B cell (primary cell): ENCODE measurements at regions of chr15 and their contacts with region 1.

Region 1: GRCh38 chr15:89406940-89407607 is 72.5 kb upstream of the POLG start:
- DNase-seq: no peak
- ATAC-seq: no peak
- H3K4me3 ChIP-seq: peak overlapping the region in 3 of 5 experiments; percentile 6 to 55 (median 15)
- H3K4me3 Mint-ChIP-seq: peak overlapping the region; percentile 95
- H3K27ac ChIP-seq: no peak overlapping the region
- H3K27ac Mint-ChIP-seq: no peak overlapping the region
- H3K4me1 ChIP-seq: peaks cover 61 to 68% of the 10 kb centered on the region in 2 donors
- H3K4me1 Mint-ChIP-seq: peaks cover 52% of the 10 kb centered on the region
- H3K27me3 ChIP-seq: peaks cover 3 to 98% (median 90%) of the 10 kb centered on the region in 4 experiments
- H3K27me3 Mint-ChIP-seq: peaks cover 87% of the 10 kb centered on the region
- CTCF ChIP-seq: no peak

Region 2: DNA sequence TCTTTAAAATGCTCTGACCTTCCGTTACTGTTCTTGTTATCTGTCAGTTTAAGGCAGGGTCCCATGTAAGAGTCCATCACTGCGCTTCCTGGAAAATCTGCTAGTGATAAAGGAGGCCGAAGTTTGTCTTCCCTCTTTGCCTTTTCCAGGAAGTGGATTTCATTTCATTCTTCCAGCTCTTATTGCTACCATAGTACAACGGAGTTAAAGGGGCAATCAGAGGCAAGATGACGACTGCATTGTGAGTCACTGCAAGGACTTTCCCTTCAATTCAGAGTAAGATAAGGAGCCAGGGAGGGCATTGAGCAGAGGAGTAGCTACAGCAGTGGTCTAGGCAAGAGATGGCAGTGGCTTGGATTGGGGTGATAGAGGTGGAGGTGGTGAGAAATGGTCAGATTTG is 843.4 kb before region 1 on chr15:
- CTCF ChIA-PET with region 1: no interaction called
- POLR2A ChIA-PET with region 1: no interaction called
- intact Hi-C with region 1: no loop called
- DNase-seq: no peak
- ATAC-seq: no peak
- H3K4me3 ChIP-seq: no peak overlapping the region
- H3K4me3 Mint-ChIP-seq: no peak overlapping the region
- H3K27ac ChIP-seq: no peak overlapping the region
- H3K27ac Mint-ChIP-seq: no peak overlapping the region
- H3K4me1 ChIP-seq: no peaks in the 10 kb centered on the region
- H3K4me1 Mint-ChIP-seq: no peaks in the 10 kb centered on the region
- H3K27me3 ChIP-seq: no peaks in the 10 kb centered on the region
- H3K27me3 Mint-ChIP-seq: peaks cover 35% of the 10 kb centered on the region
- CTCF ChIP-seq: no peak

Region 3: DNA sequence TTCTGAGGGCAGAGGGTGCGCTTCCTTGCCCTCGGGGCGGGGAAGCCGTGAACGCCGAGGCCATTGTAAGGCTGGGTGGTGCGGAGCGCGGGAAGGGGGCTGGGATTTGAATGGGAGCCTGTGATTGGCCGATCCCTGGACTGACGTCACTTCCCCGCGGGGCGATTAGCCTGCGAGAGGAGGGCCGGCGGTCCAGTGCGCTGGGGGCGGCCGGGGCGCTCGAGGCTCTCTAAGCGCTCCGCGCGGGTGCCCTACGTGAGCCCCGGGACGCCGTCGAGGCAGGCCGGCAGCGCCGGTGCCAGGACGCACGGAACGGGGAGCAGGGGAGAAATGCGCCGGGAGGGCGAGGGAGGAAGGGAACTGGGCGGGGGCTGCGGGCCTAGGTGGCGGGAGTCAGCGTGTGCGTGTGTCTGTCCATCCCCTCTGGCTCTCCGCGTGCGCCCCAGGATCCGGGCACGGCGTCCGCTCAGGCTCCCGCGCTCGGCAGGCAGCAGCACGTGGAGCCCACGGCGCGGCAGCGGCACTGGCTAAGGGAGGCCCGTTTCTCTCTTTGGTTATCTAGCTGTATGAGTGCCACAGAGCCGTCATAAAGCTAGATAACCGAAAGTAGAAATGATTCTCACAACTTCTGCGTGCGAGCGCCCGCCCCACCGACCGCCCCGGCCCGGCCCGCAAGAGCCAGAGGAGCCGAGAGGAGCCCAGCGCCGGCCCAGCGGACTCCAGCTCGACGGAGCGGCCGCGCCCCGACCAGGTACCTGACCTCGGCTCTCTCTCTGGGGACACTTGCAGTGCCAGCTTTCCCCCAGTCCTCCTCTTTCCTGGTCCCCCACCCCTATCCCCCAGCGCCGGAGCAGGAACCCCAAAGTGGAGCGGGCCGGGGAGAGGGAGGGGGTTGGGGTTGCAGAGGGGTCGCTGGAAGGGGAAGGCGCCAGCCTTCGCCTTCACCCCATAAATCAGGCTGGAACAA is 39.3 kb before region 1 on chr15:
- CTCF ChIA-PET with region 1: interaction called, 3 read pairs
- POLR2A ChIA-PET with region 1: no interaction called
- intact Hi-C with region 1: loop called (anchors 2 kb)
- DNase-seq: peak; percentile 46
- ATAC-seq: no peak
- H3K4me3 ChIP-seq: peak overlapping the region in 2 of 5 experiments; percentile 14 to 29
- H3K4me3 Mint-ChIP-seq: peak overlapping the region; percentile 63
- H3K27ac ChIP-seq: no peak overlapping the region
- H3K27ac Mint-ChIP-seq: no peak overlapping the region
- H3K4me1 ChIP-seq: peaks cover 26 to 35% of the 10 kb centered on the region in 2 donors
- H3K4me1 Mint-ChIP-seq: peaks cover 27% of the 10 kb centered on the region
- H3K27me3 ChIP-seq: peaks cover 0 to 98% (median 65%) of the 10 kb centered on the region in 4 experiments
- H3K27me3 Mint-ChIP-seq: peaks cover 71% of the 10 kb centered on the region
- CTCF ChIP-seq: no peak

Region 4: DNA sequence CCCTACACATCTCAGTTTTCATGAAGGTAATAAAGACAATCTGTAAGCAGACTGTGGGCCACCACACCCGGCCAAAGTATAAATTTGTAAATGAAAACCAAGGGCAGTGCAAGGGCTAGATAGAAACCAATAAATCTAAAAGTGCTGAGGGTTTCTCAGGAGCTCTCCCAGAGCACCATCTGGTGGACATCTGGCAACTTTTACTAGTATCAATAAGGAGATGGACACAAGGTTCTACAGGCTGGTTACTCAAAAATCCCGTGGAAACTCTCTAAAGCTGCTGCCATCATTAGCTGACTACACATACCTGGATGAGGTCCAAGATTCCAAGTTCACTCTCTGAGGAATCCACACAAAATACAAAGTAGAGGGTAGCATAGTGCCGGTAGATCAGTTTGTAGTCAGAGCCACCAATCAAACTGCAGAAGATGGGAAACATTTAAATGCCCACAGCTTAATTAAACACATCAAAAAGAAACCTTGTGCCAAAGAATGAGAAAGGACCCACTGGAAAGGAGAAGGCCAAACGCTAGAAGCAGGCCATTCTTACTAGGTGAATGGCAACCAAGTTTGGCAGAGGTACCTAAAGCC is 481.2 kb after region 1 on chr15:
- CTCF ChIA-PET with region 1: no interaction called
- POLR2A ChIA-PET with region 1: no interaction called
- intact Hi-C with region 1: no loop called
- DNase-seq: no peak
- ATAC-seq: no peak
- H3K4me3 ChIP-seq: no peak overlapping the region
- H3K4me3 Mint-ChIP-seq: no peak overlapping the region
- H3K27ac ChIP-seq: no peak overlapping the region
- H3K27ac Mint-ChIP-seq: no peak overlapping the region
- H3K4me1 ChIP-seq: peaks cover 5 to 6% of the 10 kb centered on the region in 2 donors
- H3K4me1 Mint-ChIP-seq: peaks cover 20% of the 10 kb centered on the region
- H3K27me3 ChIP-seq: no peaks in the 10 kb centered on the region
- H3K27me3 Mint-ChIP-seq: no peaks in the 10 kb centered on the region
- CTCF ChIP-seq: no peak